Mammary epithelial cell (primary cell): ENCODE measurements at regions of chr11 and their contacts with region 1.

Region 1: DNA sequence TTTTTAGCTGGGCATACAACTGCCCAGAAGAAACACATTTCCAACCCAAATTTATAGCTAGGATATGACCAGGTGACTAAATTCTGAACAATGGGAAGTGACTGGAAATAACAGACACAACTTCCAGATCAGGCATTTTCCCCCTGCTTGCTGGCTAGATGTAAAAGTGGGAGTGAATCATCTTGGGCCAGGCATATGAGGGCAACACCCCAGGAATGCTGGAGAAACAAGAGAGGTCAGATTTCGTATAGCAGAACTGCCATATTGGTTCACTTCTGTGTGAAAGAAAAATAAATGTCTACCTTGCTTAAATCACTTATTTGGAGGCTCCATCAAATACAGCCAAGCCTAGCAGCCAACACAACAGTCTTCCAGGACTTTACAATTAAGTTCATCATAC is 7.4 kb downstream of the ATL3 start:
- DNase-seq: peak; percentile 69
- H3K4me3 ChIP-seq: no peak overlapping the region
- H3K27ac ChIP-seq: peak overlapping the region; percentile 61
- H3K4me1 ChIP-seq: peaks cover 44% of the 10 kb centered on the region
- H3K27me3 ChIP-seq: no peaks in the 10 kb centered on the region
- CTCF ChIP-seq: no peak

Region 2: GRCh38 chr11:63536669-63537292 is 127.0 kb before region 1 on chr11 and contains the start of gene PLAAT4:
- CTCF ChIA-PET with region 1: no interaction called
- dilution Hi-C with region 1: no loop called
- in situ Hi-C with region 1: no loop called
- intact Hi-C with region 1: no loop called
- DNase-seq: peak; percentile 29
- H3K4me3 ChIP-seq: peak within 1 kb of the TSS; percentile 4 to 19 (median 8)
- H3K27ac ChIP-seq: no peak within 1 kb of the TSS
- H3K4me1 ChIP-seq: peaks cover 11% of the 10 kb centered on the region
- H3K27me3 ChIP-seq: no peaks in the 10 kb centered on the region
- CTCF ChIP-seq: no peak
- total RNA-seq, gene PLAAT4: 0.67 to 1.3 TPM

Region 3: GRCh38 chr11:63610604-63611394 is 53.0 kb before region 1 on chr11:
- CTCF ChIA-PET with region 1: no interaction called
- dilution Hi-C with region 1: no loop called
- in situ Hi-C with region 1: no loop called
- intact Hi-C with region 1: no loop called
- DNase-seq: peak; percentile 34
- H3K4me3 ChIP-seq: no peak overlapping the region
- H3K27ac ChIP-seq: no peak overlapping the region
- H3K4me1 ChIP-seq: peaks cover 38% of the 10 kb centered on the region
- H3K27me3 ChIP-seq: no peaks in the 10 kb centered on the region
- CTCF ChIP-seq: no peak

Region 4: GRCh38 chr11:63621931-63622782 is 41.7 kb before region 1 on chr11:
- CTCF ChIA-PET with region 1: no interaction called
- dilution Hi-C with region 1: loop called (anchors 5 kb)
- in situ Hi-C with region 1: no loop called
- intact Hi-C with region 1: no loop called
- DNase-seq: peak; percentile 61
- H3K4me3 ChIP-seq: no peak overlapping the region
- H3K27ac ChIP-seq: no peak overlapping the region
- H3K4me1 ChIP-seq: no peaks in the 10 kb centered on the region
- H3K27me3 ChIP-seq: no peaks in the 10 kb centered on the region
- CTCF ChIP-seq: no peak

Region 5: DNA sequence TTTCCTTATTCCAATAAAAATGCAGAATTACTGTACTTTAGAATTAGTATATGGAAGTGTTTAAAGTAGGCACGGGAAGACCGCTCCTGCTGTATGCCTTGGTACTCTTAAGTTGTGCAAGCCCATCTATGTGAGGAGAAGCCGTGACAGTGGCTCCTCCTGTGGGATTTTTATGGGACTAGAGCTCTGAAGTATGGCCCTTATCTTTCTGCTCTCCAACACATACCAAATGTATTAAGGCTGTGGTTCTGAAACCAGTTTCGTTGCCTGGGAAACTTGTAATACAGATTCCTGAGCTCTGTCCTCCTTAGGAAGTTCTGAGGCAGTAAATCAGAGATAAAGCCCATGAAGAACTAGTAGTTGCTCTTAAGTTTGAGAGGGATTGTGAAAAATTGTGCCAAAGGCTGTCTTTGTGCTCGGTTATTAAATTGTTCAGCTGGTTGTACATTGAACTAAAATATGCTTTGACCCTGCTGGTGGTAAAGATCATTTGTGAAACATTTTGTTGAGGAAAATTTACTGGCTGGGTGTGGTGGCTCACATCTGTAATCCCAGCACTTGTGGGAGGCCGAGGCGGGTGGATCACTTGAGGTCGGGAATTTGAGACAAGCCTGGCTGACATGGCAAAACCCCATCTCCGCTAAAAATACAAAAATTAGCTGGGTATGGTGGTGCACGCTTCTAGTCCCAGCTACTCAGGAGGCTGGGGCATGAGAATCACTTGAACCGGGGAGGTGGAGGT is 46.8 kb after region 1 on chr11:
- CTCF ChIA-PET with region 1: no interaction called
- dilution Hi-C with region 1: loop called (anchors 5 kb)
- in situ Hi-C with region 1: no loop called
- intact Hi-C with region 1: no loop called
- DNase-seq: no peak
- H3K4me3 ChIP-seq: no peak overlapping the region
- H3K27ac ChIP-seq: no peak overlapping the region
- H3K4me1 ChIP-seq: no peaks in the 10 kb centered on the region
- H3K27me3 ChIP-seq: no peaks in the 10 kb centered on the region
- CTCF ChIP-seq: no peak